Upper lobe of right lung (tissue), 1 donor: ENCODE measurements at regions of chr5 and their contacts with region 1.

Region 1: DNA sequence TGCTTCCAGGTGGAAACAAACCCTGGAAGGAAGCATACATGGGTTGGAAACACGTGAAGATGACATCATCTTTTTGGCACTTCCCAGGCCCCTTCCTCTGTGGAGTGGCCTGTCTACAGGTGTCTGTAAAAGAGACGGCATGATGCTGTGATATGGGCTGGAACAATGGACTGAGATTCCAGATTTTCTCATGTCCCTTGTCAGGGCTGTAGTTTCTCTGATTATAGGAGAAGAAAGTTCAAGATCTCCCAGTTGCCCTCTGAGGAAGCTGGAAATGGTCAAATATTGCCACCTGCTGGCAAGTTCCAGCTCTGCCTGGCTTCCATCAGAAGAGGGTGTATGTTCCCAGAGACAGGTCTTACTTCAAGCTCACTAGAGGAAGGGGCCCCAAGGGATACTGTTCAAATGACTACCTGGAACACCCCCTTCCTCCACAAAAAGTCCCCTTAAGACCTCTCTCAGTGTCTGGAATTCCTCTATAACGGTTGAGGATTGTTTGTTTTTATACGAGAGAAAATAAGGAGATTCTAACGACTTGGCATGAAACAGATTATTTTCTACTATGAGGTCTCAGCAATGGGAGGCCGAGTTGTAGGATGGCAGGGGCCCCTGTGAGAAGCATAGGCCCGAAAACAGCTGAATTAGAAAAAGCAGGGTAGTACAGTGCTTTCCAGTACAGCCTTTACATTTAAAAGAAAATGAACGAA is 7.3 kb upstream of the ANXA6 start:
- DNase-seq: peak; percentile 72
- ATAC-seq: peak; percentile 97
- H3K4me3 ChIP-seq: no peak overlapping the region
- H3K27ac ChIP-seq: no peak overlapping the region
- H3K4me1 ChIP-seq: peaks cover 5% of the 10 kb centered on the region
- H3K27me3 ChIP-seq: no peaks in the 10 kb centered on the region
- CTCF ChIP-seq: peak; percentile 94

Region 2: DNA sequence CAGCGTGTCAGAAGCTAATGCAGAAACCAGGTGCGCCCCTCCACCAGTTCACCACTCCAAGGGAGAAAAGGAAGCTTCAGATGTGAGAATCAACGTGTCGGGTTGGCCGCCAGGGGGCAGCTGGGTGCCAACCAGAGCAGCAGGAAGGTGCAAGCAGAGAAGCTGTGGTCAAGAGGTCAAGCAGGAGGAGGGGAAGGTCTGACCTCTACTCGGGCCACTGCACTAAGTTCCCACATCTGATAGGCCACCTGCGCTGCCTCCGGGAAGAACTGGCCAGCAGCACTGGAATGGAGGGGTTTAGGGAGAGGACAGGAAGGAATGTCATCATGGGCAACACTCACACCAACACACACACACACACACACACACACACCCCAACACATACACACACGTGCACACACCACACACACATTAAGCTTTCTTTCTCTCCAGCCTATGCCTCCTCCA is 38.6 kb before region 1 on chr5:
- intact Hi-C with region 1: loop called (anchors 5 kb)
- DNase-seq: peak; percentile 89
- ATAC-seq: peak; percentile 87
- H3K4me3 ChIP-seq: no peak overlapping the region
- H3K27ac ChIP-seq: no peak overlapping the region
- H3K4me1 ChIP-seq: peaks cover 9% of the 10 kb centered on the region
- H3K27me3 ChIP-seq: no peaks in the 10 kb centered on the region
- CTCF ChIP-seq: peak; percentile 81